ENCODE measurements at regions of chr18 and their contacts with region 1.

Region 1: DNA sequence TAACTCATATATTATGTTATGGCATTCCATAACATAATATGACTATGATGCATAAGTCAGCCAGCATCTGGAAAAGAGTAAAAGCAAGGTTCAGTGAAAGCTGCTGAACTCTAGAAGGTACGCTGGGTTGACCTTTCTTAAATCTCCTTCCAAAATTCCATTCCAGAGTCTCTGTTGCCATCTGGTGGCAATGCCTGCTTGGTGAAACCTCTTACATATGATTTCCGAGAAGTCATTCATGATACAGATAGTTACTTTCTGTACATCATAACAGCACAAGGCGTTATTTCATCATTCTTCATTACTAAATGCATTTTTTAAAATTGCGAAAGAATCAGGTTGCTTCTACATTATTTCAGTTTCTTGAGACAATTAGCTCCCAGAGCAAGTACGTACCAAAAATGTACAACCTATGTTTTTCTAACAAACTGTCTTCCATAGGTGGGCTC is 7.0 kb upstream of the EPG5 start:
- DNase-seq: peak in 2 of 3 donors; percentile 29 to 58
- ATAC-seq: peak; percentile 88 to 97 (median 96)
- H3K4me3 ChIP-seq: no peak overlapping the region
- H3K27ac ChIP-seq: no peak overlapping the region
- H3K4me1 ChIP-seq: peaks cover 0 to 3% (median 0%) of the 10 kb centered on the region in 4 donors
- H3K27me3 ChIP-seq: no peaks in the 10 kb centered on the region
- CTCF ChIP-seq: peak; percentile 79 to 86 (median 82)
- POLR2A ChIP-seq: no peak

Region 2: GRCh38 chr18:45690975-45691815 is 282.9 kb before region 1 on chr18:
- intact Hi-C with region 1: loop called in 1 of 2 experiments (anchors 10 kb)
- DNase-seq: peak; percentile 69 to 78 (median 76)
- ATAC-seq: peak; percentile 93 to 99 (median 97)
- H3K4me3 ChIP-seq: no peak overlapping the region
- H3K27ac ChIP-seq: no peak overlapping the region
- H3K4me1 ChIP-seq: no peaks in the 10 kb centered on the region
- H3K27me3 ChIP-seq: no peaks in the 10 kb centered on the region
- CTCF ChIP-seq: peak; percentile 75 to 88 (median 82)
- POLR2A ChIP-seq: no peak

Measured in right lobe of liver (tissue), 6 donors.